Stomach (tissue), 19 donors: ENCODE measurements at regions of chr16 and their contacts with region 1.

Region 1: DNA sequence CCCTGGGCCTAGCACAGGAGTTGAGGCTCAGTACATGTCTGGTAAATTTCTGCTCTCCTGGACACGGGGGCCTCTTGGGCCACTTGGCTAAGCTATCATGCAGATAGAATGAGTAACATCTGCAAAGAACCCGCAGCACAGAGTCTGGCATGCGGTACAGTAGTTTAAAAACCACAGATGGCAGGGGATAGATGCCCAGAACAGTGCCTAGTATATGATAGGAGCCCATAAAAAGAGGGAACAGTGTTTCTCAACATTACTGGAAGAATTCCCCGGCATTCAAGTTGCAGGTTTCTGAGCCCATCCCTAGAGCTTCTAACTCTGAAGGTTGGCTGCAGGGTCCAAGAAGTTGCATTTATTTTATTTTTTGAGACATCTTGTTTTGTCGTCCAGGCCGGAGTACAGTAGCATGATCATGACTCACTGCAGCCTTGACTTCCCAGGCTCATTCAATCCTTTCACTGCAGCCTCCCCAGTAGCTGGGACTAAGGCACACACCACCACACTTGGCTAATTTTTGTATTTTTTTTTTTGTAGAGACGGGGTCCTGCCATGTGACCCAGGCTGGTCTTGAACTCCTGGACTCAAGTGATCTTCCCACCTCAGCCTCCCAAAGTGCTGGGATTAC is 5.8 kb downstream of the CDIPT start:
- DNase-seq: no peak
- H3K4me3 ChIP-seq: no peak overlapping the region
- H3K27ac ChIP-seq: peak overlapping the region in 1 of 5 donors; percentile 17
- H3K4me1 ChIP-seq: peaks cover 18 to 62% (median 46%) of the 10 kb centered on the region in 4 donors
- H3K27me3 ChIP-seq: no peaks in the 10 kb centered on the region
- CTCF ChIP-seq: no peak
- EP300 ChIP-seq: no peak
- POLR2A ChIP-seq: no peak

Region 2: GRCh38 chr16:29805378-29806098 is 51.7 kb before region 1 on chr16:
- intact Hi-C with region 1: loop called (anchors 5 kb)
- DNase-seq: peak; percentile 98 to 99
- H3K4me3 ChIP-seq: peak overlapping the region; percentile 62 to 85 (median 77)
- H3K27ac ChIP-seq: peak overlapping the region; percentile 94 to 99 (median 97)
- H3K4me1 ChIP-seq: peaks cover 43 to 48% (median 48%) of the 10 kb centered on the region in 4 donors
- H3K27me3 ChIP-seq: no peaks in the 10 kb centered on the region
- CTCF ChIP-seq: peak in 1 of 7 experiments; percentile 14
- EP300 ChIP-seq: no peak
- POLR2A ChIP-seq: peak in 2 of 4 donors; percentile 54 to 69